Common myeloid progenitor, CD34-positive (primary cell): ENCODE measurements at regions of chr17 and their contacts with region 1.

Region 1: DNA sequence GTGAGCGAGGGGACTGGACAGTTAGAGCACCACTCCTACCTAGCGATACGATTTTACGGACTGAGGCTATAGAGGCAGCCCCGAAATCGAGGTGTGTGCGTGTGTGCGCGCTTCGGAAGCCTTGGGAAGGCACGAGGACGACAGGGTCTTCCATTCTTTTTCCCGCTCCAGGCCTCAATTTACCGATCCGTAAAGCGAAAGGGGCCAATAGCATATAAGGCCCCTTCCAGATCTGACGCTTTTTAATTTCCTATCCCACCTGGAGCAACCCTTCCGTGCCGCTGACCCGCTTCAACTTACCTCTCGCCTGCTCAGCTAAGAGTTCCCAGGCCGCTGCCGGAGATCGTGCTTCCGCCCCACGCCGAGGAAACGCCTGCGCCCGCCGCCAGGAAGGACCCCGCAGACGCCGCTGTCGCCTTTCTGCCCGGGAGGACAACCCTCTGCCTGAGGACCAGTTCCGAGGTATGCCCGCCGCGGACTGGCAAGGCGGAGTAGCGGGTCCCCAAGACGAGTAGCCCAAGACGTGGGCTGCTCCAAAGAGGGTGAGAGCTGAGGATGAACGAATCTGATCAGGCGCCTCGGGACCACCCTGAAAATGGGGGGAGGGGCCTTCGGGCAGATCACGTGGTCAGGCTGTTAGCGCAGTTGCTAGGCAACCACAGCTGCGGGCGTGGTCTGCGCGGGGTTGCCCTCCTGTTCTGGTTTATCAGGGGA is at the start of gene EFTUD2:
- DNase-seq: peak; percentile 92 to 95 (median 94)
- H3K4me3 ChIP-seq: peak within 1 kb of the TSS; percentile 90 to 99 (median 92)
- H3K27ac ChIP-seq: peak within 1 kb of the TSS; percentile 99 to 100
- H3K4me1 ChIP-seq: peaks cover 12 to 33% (median 25%) of the 10 kb centered on the region in 4 experiments
- H3K27me3 ChIP-seq: no peaks in the 10 kb centered on the region

Region 2: GRCh38 chr17:44911133-44912001 is 12.1 kb after region 1 on chr17:
- CTCF ChIA-PET with region 1: interaction called, 16 read pairs
- POLR2A ChIA-PET with region 1: no interaction called
- DNase-seq: peak; percentile 43 to 66 (median 64)
- H3K4me3 ChIP-seq: peak overlapping the region in 4 of 7 experiments; percentile 12 to 51 (median 44)
- H3K27ac ChIP-seq: no peak overlapping the region
- H3K4me1 ChIP-seq: peaks cover 0 to 10% (median 7%) of the 10 kb centered on the region in 4 experiments
- H3K27me3 ChIP-seq: peaks cover 0 to 48% (median 21%) of the 10 kb centered on the region in 5 experiments

Region 3: DNA sequence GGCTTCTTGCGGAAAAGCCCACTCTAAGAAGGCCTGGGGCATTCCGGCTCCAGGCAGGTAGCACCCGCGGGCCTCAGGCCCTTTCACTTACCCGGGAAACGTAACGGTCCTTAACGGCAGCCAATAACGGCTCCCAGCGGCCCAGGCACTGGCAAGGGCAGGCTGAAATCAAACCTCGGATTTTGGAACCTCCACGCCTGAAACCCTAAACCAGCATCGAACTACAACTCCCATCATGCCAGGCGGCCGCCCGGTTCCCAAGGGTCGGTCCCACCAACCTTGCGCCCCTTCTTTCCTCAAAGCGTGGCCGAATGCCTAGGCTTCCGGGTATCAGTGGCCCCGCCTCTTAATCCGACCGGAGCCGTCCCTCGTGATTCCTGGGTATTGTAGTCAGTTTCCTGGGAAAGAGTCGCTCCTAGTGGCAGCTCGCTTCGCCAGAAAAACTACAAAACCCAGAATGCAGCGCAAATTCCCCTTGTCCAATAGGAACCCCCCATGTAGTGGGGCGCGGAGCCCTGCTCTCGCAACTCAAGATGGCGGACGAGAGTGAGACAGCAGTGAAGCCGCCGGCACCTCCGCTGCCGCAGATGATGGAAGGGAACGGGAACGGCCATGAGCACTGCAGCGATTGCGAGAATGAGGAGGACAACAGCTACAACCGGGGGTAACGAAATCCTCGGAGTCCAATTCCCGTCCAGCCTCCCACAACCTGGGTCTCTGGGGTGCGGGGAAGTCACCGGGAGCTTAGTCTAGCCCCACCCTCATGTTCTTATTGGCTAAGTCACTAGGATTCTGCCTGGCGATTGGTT is 161.8 kb after region 1 on chr17 and contains the start of gene NMT1:
- CTCF ChIA-PET with region 1: no interaction called
- POLR2A ChIA-PET with region 1: no interaction called
- DNase-seq: peak; percentile 100
- H3K4me3 ChIP-seq: peak within 1 kb of the TSS; percentile 84 to 99 (median 96)
- H3K27ac ChIP-seq: peak within 1 kb of the TSS; percentile 95 to 97
- H3K4me1 ChIP-seq: peaks cover 15 to 43% (median 31%) of the 10 kb centered on the region in 4 experiments
- H3K27me3 ChIP-seq: no peaks in the 10 kb centered on the region